Mammary epithelial cell (primary cell): ENCODE measurements at regions of chr12 and their contacts with region 1.

Region 1: GRCh38 chr12:97038834-97039233 is 131.8 kb downstream of the NEDD1 start:
- DNase-seq: no peak
- H3K4me3 ChIP-seq: no peak overlapping the region
- H3K27ac ChIP-seq: no peak overlapping the region
- H3K4me1 ChIP-seq: no peaks in the 10 kb centered on the region
- H3K27me3 ChIP-seq: no peaks in the 10 kb centered on the region
- CTCF ChIP-seq: no peak

Region 2: GRCh38 chr12:97022536-97023230 is 16.2 kb before region 1 on chr12:
- CTCF ChIA-PET with region 1: no interaction called
- dilution Hi-C with region 1: no loop called
- in situ Hi-C with region 1: no loop called
- intact Hi-C with region 1: loop called (anchors 1 kb)
- DNase-seq: no peak
- H3K4me3 ChIP-seq: no peak overlapping the region
- H3K27ac ChIP-seq: no peak overlapping the region
- H3K4me1 ChIP-seq: no peaks in the 10 kb centered on the region
- H3K27me3 ChIP-seq: peaks cover 2% of the 10 kb centered on the region
- CTCF ChIP-seq: no peak

Region 3: DNA sequence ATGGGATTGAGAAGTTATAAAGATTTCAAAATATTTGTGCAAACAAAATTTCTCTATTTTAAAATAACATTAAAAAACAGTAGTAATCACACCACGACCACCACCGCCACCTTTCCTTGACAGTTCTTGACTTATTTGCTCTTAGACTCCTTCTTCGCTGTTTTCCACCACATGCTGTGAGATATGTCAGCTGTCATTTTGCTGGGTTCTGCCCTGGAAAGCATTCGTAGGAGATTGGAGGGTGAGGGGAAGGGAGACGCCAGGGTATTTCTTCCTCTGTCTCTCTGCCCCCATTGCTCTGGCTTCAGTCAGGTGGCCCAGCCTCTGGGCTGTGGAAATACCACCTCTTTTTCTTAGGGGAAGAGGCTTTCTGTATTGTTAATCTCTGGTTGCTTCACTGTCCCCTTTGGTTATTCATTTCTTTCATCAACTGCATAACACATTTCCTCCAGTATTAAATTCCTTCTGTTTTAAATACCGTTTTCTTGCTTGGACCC is 54.4 kb after region 1 on chr12:
- CTCF ChIA-PET with region 1: no interaction called
- dilution Hi-C with region 1: loop called (anchors 5 kb)
- in situ Hi-C with region 1: no loop called
- intact Hi-C with region 1: no loop called
- DNase-seq: no peak
- H3K4me3 ChIP-seq: no peak overlapping the region
- H3K27ac ChIP-seq: no peak overlapping the region
- H3K4me1 ChIP-seq: no peaks in the 10 kb centered on the region
- H3K27me3 ChIP-seq: peaks cover 3% of the 10 kb centered on the region
- CTCF ChIP-seq: no peak

Region 4: DNA sequence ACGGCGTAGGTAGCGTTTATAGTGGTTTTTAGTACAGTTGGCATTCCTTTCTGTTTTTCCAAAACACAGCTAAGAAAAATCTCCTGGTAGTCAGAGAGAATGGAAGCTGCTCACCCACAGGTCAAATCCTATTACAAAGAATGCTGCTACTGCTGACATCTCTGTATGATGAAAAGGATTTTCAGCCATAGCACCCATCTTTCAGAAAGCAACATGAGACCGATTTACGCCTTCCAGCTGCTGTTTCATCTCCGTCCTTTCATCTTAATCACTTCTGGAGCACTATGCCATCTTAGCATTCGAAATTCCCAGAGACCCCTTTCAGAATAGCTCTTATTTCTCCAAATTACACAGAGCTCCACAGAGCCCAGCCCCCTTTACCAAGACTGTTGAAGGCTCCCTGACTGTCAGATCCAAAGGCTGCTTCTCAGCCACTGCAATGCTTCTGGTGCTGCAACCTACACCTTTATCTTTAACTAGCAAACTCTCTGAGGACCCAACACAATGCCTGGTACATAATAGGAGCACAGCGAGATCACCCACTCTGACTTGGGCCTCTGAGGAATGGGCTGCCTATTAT is 80.1 kb after region 1 on chr12:
- CTCF ChIA-PET with region 1: no interaction called
- dilution Hi-C with region 1: loop called (anchors 5 kb)
- in situ Hi-C with region 1: no loop called
- intact Hi-C with region 1: no loop called
- DNase-seq: no peak
- H3K4me3 ChIP-seq: no peak overlapping the region
- H3K27ac ChIP-seq: no peak overlapping the region
- H3K4me1 ChIP-seq: no peaks in the 10 kb centered on the region
- H3K27me3 ChIP-seq: no peaks in the 10 kb centered on the region
- CTCF ChIP-seq: no peak